ENCODE measurements at regions of chr4 and their contacts with region 1.

Region 1: GRCh38 chr4:121960818-121961217 is 9.0 kb upstream of the TRPC3 start:
- DNase-seq: no peak
- ATAC-seq: no peak
- H3K4me3 ChIP-seq: no peak overlapping the region
- H3K27ac ChIP-seq: no peak overlapping the region
- H3K4me1 ChIP-seq: no peaks in the 10 kb centered on the region
- H3K27me3 ChIP-seq: peaks cover 0 to 16% (median 0%) of the 10 kb centered on the region in 9 donors
- CTCF ChIP-seq: no peak
- POLR2A ChIP-seq: no peak

Region 2: GRCh38 chr4:121243485-121243884 is 717.3 kb before region 1 on chr4:
- intact Hi-C with region 1: loop called in 1 of 10 experiments (anchors 5 kb)
- DNase-seq: no peak
- ATAC-seq: no peak
- H3K4me3 ChIP-seq: peak overlapping the region in 1 of 12 donors; percentile 3
- H3K27ac ChIP-seq: no peak overlapping the region
- H3K4me1 ChIP-seq: no peaks in the 10 kb centered on the region
- H3K27me3 ChIP-seq: no peaks in the 10 kb centered on the region
- CTCF ChIP-seq: no peak
- POLR2A ChIP-seq: no peak

Region 3: DNA sequence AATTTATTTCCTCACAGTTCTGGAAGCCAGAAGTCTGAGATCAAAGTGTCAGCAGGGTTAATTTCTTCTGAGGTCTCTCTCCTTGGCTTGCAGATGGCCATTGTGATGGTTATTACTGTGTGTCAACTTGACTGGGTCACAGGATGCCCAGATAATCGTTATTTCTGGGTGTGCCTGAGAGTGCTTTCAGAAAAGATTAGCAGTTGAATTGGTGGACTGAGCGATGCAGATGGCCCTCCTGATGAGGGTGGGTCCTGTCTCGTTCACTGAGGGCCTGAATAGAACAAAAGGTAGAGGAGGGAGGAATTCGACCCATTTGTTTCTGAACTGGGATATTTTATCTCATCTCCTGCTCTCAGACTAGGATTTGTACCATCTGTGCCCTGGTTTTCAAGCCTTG is 211.6 kb before region 1 on chr4:
- intact Hi-C with region 1: no loop called
- DNase-seq: no peak
- ATAC-seq: no peak
- H3K4me3 ChIP-seq: no peak overlapping the region
- H3K27ac ChIP-seq: no peak overlapping the region
- H3K4me1 ChIP-seq: no peaks in the 10 kb centered on the region
- H3K27me3 ChIP-seq: peaks cover 0 to 7% (median 0%) of the 10 kb centered on the region in 9 donors
- CTCF ChIP-seq: no peak
- POLR2A ChIP-seq: no peak